ENCODE measurements at regions of chr9 and their contacts with region 1.

Region 1: DNA sequence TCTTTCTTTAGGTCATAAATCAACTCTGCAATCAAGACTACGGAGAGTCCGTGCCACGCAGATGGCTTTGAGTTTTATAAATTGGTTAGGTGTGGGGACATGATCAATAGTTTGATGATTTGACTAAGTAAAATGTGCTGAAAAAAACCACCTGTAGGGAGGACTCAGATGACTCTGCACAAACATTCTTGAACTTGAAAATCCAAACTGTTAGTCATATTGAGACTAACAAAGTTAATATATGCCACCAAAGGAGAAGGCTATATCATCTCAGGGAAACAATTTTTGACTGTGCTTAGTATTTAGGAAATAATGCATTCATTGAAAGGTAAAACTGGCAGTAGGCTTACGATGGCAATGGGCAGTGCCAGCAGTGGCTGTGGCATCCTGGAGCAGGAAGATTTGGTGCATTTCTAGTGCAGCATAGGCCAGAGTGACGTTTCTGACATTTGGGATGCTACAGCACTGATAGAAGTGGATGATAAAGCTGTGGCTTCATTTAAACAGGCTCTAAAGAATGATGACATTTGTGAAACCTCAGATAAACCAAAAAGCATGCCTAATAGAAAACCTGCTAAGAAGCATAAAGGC is 291.1 kb downstream of the MLLT3 start:
- DNase-seq: no peak
- ATAC-seq: no peak
- H3K4me3 ChIP-seq: no peak overlapping the region
- H3K27ac ChIP-seq: no peak overlapping the region
- H3K4me1 ChIP-seq: no peaks in the 10 kb centered on the region
- H3K27me3 ChIP-seq: peaks cover 15% of the 10 kb centered on the region
- CTCF ChIP-seq: no peak
- POLR2A ChIP-seq: no peak
- RAD21 ChIP-seq: no peak

Region 2: GRCh38 chr9:19934301-19934868 is 396.8 kb before region 1 on chr9:
- CTCF ChIA-PET with region 1: no interaction called
- POLR2A ChIA-PET with region 1: no interaction called
- RAD21 ChIA-PET with region 1: no interaction called
- intact Hi-C with region 1: loop called (anchors 10 kb)
- DNase-seq: no peak
- ATAC-seq: no peak
- H3K4me3 ChIP-seq: no peak overlapping the region
- H3K27ac ChIP-seq: no peak overlapping the region
- H3K4me1 ChIP-seq: no peaks in the 10 kb centered on the region
- H3K27me3 ChIP-seq: 0 out of 2 replicates have a peak, but pooled peaks cover 3% of the 10 kb centered on the region
- CTCF ChIP-seq: no peak
- POLR2A ChIP-seq: no peak
- RAD21 ChIP-seq: no peak

Region 3: GRCh38 chr9:20640331-20641187 is 309.4 kb after region 1 on chr9:
- CTCF ChIA-PET with region 1: no interaction called
- POLR2A ChIA-PET with region 1: no interaction called
- RAD21 ChIA-PET with region 1: no interaction called
- intact Hi-C with region 1: no loop called
- DNase-seq: no peak
- ATAC-seq: peak; percentile 63; the same call in 1 of the 2 replicates
- H3K4me3 ChIP-seq: no peak overlapping the region
- H3K27ac ChIP-seq: no peak overlapping the region
- H3K4me1 ChIP-seq: peaks cover 3 to 8% of the 10 kb centered on the region in 2 experiments; a peak in 3 of 4 replicates
- H3K27me3 ChIP-seq: no peaks in the 10 kb centered on the region
- CTCF ChIP-seq: no peak
- POLR2A ChIP-seq: no peak
- RAD21 ChIP-seq: no peak

Measured in HCT116 (cell line).